ENCODE measurements at regions of chr21 and their contacts with region 1.

Region 1: DNA sequence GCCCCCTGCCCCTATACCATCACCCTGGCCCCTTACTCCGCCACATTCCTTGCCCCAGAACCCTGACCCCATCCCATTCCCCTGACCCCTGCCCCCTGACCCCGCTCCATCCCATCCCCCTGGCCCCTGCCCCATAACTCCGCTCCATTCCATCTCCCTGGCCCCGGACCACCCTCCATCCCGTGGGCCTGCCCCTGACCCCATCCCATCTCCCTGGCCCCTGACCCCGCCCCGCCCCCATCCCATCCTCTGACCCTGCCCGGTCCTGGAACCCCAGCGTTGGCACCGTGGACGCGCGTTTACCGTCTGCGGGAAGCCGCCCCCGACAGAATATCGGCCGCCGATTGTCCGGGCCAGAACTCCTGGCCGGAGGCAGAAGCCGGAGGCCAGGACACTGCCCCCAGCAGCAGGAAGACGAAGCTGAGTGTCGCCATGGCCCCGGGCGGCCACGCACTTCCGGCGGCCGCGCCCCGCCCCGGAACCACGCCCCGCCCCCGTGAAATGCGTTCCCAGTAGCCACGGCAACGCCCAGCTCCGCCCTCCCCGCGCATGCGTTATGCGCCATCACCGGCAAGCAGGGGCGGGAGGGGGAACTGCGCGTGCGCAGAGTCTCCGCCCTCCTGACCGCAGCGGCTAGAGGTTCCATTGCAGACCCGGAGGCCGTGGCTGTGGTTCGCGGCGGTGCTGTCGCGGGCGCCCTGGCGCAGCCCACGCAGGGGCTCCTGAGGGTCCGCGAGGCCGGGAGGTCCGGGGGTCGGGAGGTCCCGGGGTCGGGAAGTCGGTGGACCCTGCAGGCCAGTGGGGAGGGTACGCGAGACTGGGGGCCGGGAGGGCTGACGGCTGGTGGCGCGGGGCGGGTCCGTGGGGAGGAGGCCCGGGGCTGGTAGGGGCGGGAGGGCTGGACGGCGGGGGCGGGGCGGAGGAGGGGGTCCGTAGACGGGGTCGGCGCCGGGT is at the start of gene POFUT2:
- DNase-seq: peak; percentile 98
- ATAC-seq: peak; percentile 89
- H3K4me3 Mint-ChIP-seq: peak within 1 kb of the TSS; percentile 71
- H3K27ac Mint-ChIP-seq: peak within 1 kb of the TSS; percentile 64
- H3K4me1 Mint-ChIP-seq: peaks cover 16% of the 10 kb centered on the region
- H3K27me3 Mint-ChIP-seq: peaks cover 2% of the 10 kb centered on the region
- total RNA-seq, gene POFUT2: 16.4 to 19.5 TPM

Region 2: DNA sequence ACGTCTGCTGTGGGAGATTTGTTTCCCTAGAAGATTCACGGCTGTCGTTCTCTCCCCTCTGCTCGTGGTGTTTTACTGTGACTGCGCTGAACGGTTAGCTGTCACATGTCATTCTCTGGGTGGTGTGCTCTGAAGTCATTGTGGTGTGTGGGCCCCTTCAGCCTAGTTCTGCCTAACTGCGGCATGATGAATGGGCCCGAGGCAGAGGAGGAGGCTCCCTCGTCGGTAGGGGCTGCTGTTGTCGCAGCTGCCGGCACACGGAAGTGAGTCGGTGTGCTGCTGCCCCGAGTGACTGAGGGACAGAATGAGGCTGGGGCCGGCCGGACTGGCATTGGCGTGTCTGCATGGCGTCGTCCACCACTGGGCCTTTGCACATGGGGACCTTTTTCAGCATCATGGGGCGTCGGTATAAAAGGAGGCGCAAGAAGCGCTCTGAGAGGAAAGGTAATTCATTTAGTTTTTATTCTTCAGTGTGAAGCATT is 135.4 kb before region 1 on chr21:
- CTCF ChIA-PET with region 1: interaction called, 37 read pairs
- DNase-seq: peak; percentile 92
- ATAC-seq: peak; percentile 97
- H3K4me3 Mint-ChIP-seq: peak overlapping the region; percentile 75
- H3K27ac Mint-ChIP-seq: peak overlapping the region; percentile 88
- H3K4me1 Mint-ChIP-seq: peaks cover 44% of the 10 kb centered on the region
- H3K27me3 Mint-ChIP-seq: no peaks in the 10 kb centered on the region

Region 3: GRCh38 chr21:45309069-45309986 is 21.6 kb after region 1 on chr21:
- CTCF ChIA-PET with region 1: interaction called, 13 read pairs
- DNase-seq: peak; percentile 50
- ATAC-seq: peak; percentile 56
- H3K4me3 Mint-ChIP-seq: no peak overlapping the region
- H3K27ac Mint-ChIP-seq: no peak overlapping the region
- H3K4me1 Mint-ChIP-seq: peaks cover 10% of the 10 kb centered on the region
- H3K27me3 Mint-ChIP-seq: peaks cover 14% of the 10 kb centered on the region

Region 4: GRCh38 chr21:45439161-45439872 is 151.6 kb after region 1 on chr21:
- CTCF ChIA-PET with region 1: interaction called, 21 read pairs
- DNase-seq: peak; percentile 87
- ATAC-seq: peak; percentile 93
- H3K4me3 Mint-ChIP-seq: peak overlapping the region; percentile 60
- H3K27ac Mint-ChIP-seq: peak overlapping the region; percentile 68
- H3K4me1 Mint-ChIP-seq: peaks cover 7% of the 10 kb centered on the region
- H3K27me3 Mint-ChIP-seq: peaks cover 2% of the 10 kb centered on the region